Activated T-helper 2 cell treated with anti-CD3 and anti-CD28 coated beads, Interferon-gamma antibody, Interleukin-2, Interleukin-4, amounts not matched to agents 10 μg/mL and 5 μg/mL and 100 μg/mL, durations not matched to agents 14 hours and 24 hours and 36 hours (primary cell): ENCODE measurements at regions of chr7 and their contacts with region 1.

Region 1: GRCh38 chr7:15305002-15305600 is 256.7 kb downstream of the AGMO start:
- DNase-seq: no peak
- H3K4me3 Mint-ChIP-seq: no peak overlapping the region
- H3K27ac Mint-ChIP-seq: no peak overlapping the region
- H3K4me1 Mint-ChIP-seq: no peaks in the 10 kb centered on the region
- H3K27me3 Mint-ChIP-seq: no peaks in the 10 kb centered on the region

Region 2: DNA sequence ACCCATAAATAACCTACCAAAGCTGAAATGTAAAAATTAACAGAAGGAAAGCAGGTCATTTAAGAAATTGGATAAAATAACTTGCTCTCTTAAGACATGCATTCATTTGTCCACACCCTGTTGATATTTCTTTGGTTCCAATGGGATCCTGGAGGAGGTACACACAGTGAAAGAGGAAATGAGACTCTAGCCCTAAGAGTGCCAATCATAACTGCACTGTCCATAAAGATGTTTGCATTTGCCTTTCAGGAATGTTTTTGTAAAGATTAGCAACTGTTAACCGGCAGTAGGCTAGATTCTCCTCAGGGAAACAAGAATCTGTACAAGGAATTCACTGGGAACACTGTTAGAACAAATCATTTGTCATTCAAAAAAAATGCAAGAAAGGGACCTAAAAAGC is 320.4 kb after region 1 on chr7:
- intact Hi-C with region 1: no loop called
- DNase-seq: no peak
- H3K4me3 Mint-ChIP-seq: no peak overlapping the region
- H3K27ac Mint-ChIP-seq: no peak overlapping the region
- H3K4me1 Mint-ChIP-seq: no peaks in the 10 kb centered on the region
- H3K27me3 Mint-ChIP-seq: no peaks in the 10 kb centered on the region

Region 3: GRCh38 chr7:16071246-16071857 is 766.3 kb after region 1 on chr7:
- intact Hi-C with region 1: loop called (anchors 5 kb)
- DNase-seq: no peak
- H3K4me3 Mint-ChIP-seq: no peak overlapping the region
- H3K27ac Mint-ChIP-seq: no peak overlapping the region
- H3K4me1 Mint-ChIP-seq: no peaks in the 10 kb centered on the region
- H3K27me3 Mint-ChIP-seq: no peaks in the 10 kb centered on the region